ENCODE measurements at regions of chr6 and their contacts with region 1.

Region 1: DNA sequence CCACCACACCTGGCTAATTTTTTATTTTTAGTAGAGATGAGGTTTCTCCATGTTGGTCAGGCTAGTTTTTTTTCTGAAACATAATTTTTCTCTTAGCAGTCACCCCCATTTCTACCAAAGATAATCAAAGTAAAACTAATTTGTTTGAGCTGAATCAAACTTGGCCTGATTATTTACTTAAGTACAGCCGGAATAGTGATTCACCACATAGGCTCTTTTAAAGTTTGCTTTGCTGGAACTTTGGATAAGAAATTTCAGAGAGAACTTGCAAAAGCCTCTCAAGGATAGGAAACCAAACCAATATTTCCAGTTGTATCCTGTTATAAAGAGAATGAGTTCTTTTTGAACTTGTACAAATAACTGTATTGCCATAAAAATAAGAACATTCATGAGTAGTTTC is 105.0 kb upstream of the SYNCRIP start:
- DNase-seq: peak; percentile 88
- ATAC-seq: peak; percentile 85
- H3K4me3 ChIP-seq: peak overlapping the region; percentile 43
- H3K27ac ChIP-seq: peak overlapping the region; percentile 61
- H3K4me1 ChIP-seq: peaks cover 33% of the 10 kb centered on the region
- H3K27me3 ChIP-seq: no peaks in the 10 kb centered on the region
- CTCF ChIP-seq: no peak

Region 2: DNA sequence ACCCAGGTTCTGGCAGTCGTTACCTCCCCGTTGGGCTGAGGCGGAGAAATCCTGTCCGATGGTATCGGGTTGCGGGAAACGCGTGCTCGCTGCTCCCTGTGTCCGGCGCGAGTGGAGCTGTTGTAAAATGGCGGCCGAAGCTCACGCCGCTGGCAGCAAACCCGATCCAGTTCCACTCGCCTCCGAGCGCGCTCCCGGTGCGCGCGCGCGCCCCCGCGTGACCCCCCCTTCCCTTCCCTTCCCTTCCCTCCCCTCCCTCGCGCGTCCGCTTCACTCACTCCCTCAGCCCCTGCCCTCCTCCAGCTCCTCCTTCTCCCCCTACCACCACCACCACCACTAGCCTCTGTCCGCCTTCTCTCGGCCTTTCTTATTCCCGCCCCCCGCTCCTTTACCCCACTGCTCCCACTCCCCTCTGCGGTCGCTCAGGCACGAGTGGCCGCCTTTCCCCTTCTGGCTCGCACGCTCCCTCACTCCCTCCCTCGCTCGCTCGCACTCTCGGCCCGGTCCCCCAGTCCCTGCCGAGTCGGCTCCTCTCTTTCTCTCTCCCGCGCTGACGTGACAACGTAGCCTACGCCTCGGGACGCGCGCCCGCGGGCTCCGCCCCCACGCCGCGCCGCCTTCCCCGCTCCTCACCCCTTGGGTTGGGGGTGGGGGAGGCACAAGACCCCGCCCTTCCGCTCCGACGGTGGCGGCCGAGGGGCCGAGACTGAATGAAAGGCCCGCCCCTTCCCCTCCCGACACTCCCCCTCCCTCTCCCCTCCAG is 104.7 kb before region 1 on chr6 and contains the start of gene SYNCRIP:
- CTCF ChIA-PET with region 1: interaction called, 20 read pairs
- POLR2A ChIA-PET with region 1: interaction called, 3 read pairs
- intact Hi-C with region 1: loop called (anchors 2 kb)
- DNase-seq: peak; percentile 96
- ATAC-seq: peak; percentile 71
- H3K4me3 ChIP-seq: peak within 1 kb of the TSS; percentile 89
- H3K27ac ChIP-seq: peak within 1 kb of the TSS; percentile 98
- H3K4me1 ChIP-seq: peaks cover 17% of the 10 kb centered on the region
- H3K27me3 ChIP-seq: no peaks in the 10 kb centered on the region
- CTCF ChIP-seq: no peak
- total RNA-seq, gene SYNCRIP: 63.8 and 76.6 TPM in 2 replicates

Region 3: DNA sequence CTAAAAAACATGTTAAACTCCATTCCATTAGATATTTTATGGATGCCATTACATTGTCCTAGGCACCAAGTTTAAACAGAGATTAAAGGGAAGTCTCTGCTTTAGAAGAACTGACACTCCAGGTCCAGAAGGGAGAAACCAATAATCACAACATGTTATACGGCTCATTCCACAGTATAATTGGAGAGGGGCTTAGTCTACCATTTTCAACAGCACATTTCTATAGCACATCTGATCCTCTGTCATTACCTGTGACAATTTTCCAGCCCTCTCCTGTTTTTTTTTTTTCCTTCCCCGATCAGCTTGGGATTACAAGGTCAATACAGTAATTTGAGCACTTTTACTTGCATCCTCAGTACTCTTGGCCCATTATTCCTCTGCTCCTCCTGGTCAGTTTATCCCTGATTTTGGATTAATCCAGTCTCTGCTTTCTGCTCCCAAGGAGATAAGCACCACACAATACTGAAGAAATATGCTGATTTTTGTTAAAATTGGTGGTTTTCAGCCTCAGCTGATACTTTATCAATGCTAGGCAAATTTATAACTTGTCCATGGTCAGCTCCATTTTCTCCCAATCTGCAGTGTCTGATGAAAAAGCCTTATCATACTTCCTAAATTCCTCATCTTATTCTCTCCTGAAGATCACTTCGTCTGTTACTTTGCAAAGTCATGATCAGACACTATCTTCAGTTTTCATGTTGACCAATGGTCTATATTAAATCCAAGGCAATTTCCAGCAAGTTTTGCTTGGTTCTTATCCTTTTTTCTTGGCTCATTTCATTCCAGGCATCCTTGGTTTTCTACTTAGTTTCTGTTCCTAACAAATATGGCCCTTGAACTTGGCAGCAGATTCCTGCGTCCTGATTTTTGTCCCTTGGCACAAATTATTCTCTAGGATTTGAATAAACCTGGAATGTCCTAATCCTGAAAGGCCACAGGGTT is 74.2 kb before region 1 on chr6:
- CTCF ChIA-PET with region 1: no interaction called
- POLR2A ChIA-PET with region 1: interaction called, 14 read pairs
- intact Hi-C with region 1: loop called (anchors 1 kb)
- DNase-seq: no peak
- ATAC-seq: no peak
- H3K4me3 ChIP-seq: no peak overlapping the region
- H3K27ac ChIP-seq: no peak overlapping the region
- H3K4me1 ChIP-seq: peaks cover 20% of the 10 kb centered on the region
- H3K27me3 ChIP-seq: no peaks in the 10 kb centered on the region
- CTCF ChIP-seq: no peak

Region 4: GRCh38 chr6:85678602-85679444 is 68.8 kb before region 1 on chr6:
- CTCF ChIA-PET with region 1: interaction called, 4 read pairs
- POLR2A ChIA-PET with region 1: interaction called, 7 read pairs
- intact Hi-C with region 1: loop called (anchors 1 kb)
- DNase-seq: peak; percentile 96
- ATAC-seq: peak; percentile 83
- H3K4me3 ChIP-seq: peak overlapping the region; percentile 99
- H3K27ac ChIP-seq: peak overlapping the region; percentile 89
- H3K4me1 ChIP-seq: peaks cover 25% of the 10 kb centered on the region
- H3K27me3 ChIP-seq: no peaks in the 10 kb centered on the region
- CTCF ChIP-seq: no peak

Measured in PC-3 (cell line).